ENCODE measurements at regions of chr18 and their contacts with region 1.

Region 1: DNA sequence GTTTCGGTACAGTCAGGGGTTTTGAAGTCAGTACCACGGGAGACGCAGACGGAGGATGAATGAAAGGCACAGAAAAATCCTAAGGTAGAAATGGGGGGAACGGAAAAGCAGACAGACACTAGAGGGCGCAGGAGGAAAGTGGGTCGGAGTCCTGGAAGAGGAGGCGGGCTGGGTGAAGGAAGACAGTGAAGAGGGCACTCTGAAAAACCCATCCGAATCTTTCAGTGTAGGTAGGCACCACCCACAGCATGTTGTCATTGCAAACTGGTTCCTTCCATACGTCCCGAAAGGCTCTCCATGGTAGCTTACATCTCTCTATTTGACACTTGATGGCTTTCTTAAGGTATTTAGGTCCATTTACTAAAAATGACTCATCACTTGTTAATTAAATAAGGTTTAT is 18.5 kb upstream of the ZNF236 start:
- DNase-seq: peak; percentile 51
- ATAC-seq: peak; percentile 84
- H3K4me3 ChIP-seq: no peak overlapping the region
- H3K27ac ChIP-seq: no peak overlapping the region
- H3K4me1 ChIP-seq: peaks cover 7% of the 10 kb centered on the region; the same call in 1 of the 2 replicates
- H3K27me3 ChIP-seq: no peaks in the 10 kb centered on the region
- CTCF ChIP-seq: peak; percentile 87 to 91 (median 90)
- EP300 ChIP-seq: no peak
- POLR2A ChIP-seq: no peak
- RAD21 ChIP-seq: peak; percentile 77

Region 2: GRCh38 chr18:76592981-76593381 is 210.8 kb before region 1 on chr18:
- CTCF ChIA-PET with region 1: no interaction called
- POLR2A ChIA-PET with region 1: no interaction called
- RAD21 ChIA-PET with region 1: no interaction called
- SMC1A ChIA-PET with region 1: no interaction called
- in situ Hi-C with region 1: no loop called
- intact Hi-C with region 1: no loop called
- DNase-seq: no peak
- ATAC-seq: no peak
- H3K4me3 ChIP-seq: no peak overlapping the region
- H3K27ac ChIP-seq: no peak overlapping the region
- H3K4me1 ChIP-seq: no peaks in the 10 kb centered on the region
- H3K27me3 ChIP-seq: no peaks in the 10 kb centered on the region; a peak in 1 of 4 replicates
- CTCF ChIP-seq: no peak
- EP300 ChIP-seq: no peak
- POLR2A ChIP-seq: no peak
- RAD21 ChIP-seq: no peak

Region 3: DNA sequence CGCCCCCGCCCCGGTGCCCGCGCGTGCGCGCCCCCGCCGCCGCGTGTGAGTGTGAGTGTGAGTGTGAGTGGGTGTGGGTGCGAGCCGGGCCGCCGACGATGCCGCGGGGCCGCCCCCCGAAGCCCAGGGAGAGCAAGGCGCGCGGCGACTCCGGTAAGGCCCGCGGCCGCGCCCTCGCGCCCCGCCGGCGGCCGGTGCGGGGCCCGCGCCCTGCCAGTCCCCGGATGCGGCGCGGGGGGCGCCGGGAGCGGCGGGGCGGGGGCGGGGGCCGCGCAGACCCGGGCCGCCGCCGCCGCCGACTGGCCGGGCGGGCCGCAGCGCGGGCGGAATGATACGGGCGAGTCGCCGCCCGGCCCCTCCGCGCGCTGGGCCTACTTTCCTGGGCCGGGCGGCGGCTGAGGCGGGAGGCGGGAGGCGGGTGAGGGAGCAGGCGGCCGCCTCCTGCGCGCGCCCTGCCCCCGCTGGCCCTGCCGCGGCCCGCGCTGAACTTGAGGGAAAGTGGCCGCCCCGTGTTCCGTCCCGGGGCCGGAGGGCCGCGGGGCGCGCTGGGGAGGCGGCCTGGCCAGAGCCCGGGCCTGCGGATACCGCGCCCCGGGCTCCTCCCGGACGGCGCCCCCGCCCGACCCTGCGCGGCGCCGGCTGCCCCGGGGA is 18.8 kb after region 1 on chr18 and contains the start of gene ZNF236:
- CTCF ChIA-PET with region 1: interaction called, 90 read pairs
- POLR2A ChIA-PET with region 1: interaction called, 4 read pairs
- RAD21 ChIA-PET with region 1: interaction called, 9 read pairs
- SMC1A ChIA-PET with region 1: interaction called, 27 read pairs
- in situ Hi-C with region 1: no loop called
- intact Hi-C with region 1: no loop called
- DNase-seq: no peak
- ATAC-seq: peak; percentile 47
- H3K4me3 ChIP-seq: peak within 1 kb of the TSS; percentile 100
- H3K27ac ChIP-seq: peak within 1 kb of the TSS; percentile 95
- H3K4me1 ChIP-seq: peaks cover 16% of the 10 kb centered on the region
- H3K27me3 ChIP-seq: no peaks in the 10 kb centered on the region
- CTCF ChIP-seq: no peak
- EP300 ChIP-seq: no peak
- POLR2A ChIP-seq: peak; percentile 76
- RAD21 ChIP-seq: no peak
- polyA plus RNA-seq, gene ZNF236: 1.0 to 1.3 TPM

Region 4: DNA sequence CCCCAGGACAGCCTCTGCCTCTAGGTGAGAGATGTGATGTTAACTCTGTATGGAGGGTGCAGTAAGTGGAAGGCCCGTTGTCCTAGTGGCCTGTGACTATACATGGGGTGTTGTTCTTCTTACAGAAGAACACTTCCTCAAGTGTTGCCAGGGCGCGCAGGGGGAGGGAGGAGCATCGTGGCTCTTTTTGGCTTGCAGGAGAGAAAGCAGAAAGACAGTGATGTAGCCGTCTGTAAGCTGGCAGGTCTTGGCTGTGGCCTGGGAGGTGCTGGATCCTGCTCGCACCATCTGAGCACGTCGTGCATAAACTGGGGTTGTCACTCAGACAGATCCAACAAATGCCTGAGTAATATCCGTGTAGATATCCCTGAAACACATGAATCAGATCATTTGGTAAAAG is 62.9 kb after region 1 on chr18:
- CTCF ChIA-PET with region 1: interaction called, 27 read pairs
- POLR2A ChIA-PET with region 1: no interaction called
- RAD21 ChIA-PET with region 1: no interaction called
- SMC1A ChIA-PET with region 1: interaction called, 7 read pairs
- in situ Hi-C with region 1: no loop called
- intact Hi-C with region 1: no loop called
- DNase-seq: no peak
- ATAC-seq: no peak
- H3K4me3 ChIP-seq: no peak overlapping the region
- H3K27ac ChIP-seq: no peak overlapping the region
- H3K4me1 ChIP-seq: no peaks in the 10 kb centered on the region
- H3K27me3 ChIP-seq: no peaks in the 10 kb centered on the region
- CTCF ChIP-seq: no peak
- EP300 ChIP-seq: no peak
- POLR2A ChIP-seq: no peak
- RAD21 ChIP-seq: no peak

Region 5: GRCh38 chr18:76922107-76922506 is 118.3 kb after region 1 on chr18:
- CTCF ChIA-PET with region 1: interaction called, 64 read pairs
- POLR2A ChIA-PET with region 1: no interaction called
- RAD21 ChIA-PET with region 1: interaction called, 21 read pairs
- SMC1A ChIA-PET with region 1: interaction called, 30 read pairs
- in situ Hi-C with region 1: no loop called
- intact Hi-C with region 1: loop called (anchors 1 kb)
- DNase-seq: peak; percentile 26
- ATAC-seq: peak; percentile 100
- H3K4me3 ChIP-seq: no peak overlapping the region
- H3K27ac ChIP-seq: no peak overlapping the region
- H3K4me1 ChIP-seq: no peaks in the 10 kb centered on the region
- H3K27me3 ChIP-seq: no peaks in the 10 kb centered on the region
- CTCF ChIP-seq: peak; percentile 81 to 83 (median 81)
- EP300 ChIP-seq: peak in 1 of 2 experiments; percentile 12; a peak in 1 of 4 replicates
- POLR2A ChIP-seq: no peak
- RAD21 ChIP-seq: peak; percentile 92

Region 6: GRCh38 chr18:77000527-77000926 is 196.7 kb after region 1 on chr18:
- CTCF ChIA-PET with region 1: interaction called, 16 read pairs
- POLR2A ChIA-PET with region 1: no interaction called
- RAD21 ChIA-PET with region 1: interaction called, 4 read pairs
- SMC1A ChIA-PET with region 1: interaction called, 4 read pairs
- in situ Hi-C with region 1: no loop called
- intact Hi-C with region 1: no loop called
- DNase-seq: no peak
- ATAC-seq: peak; percentile 69
- H3K4me3 ChIP-seq: no peak overlapping the region
- H3K27ac ChIP-seq: no peak overlapping the region
- H3K4me1 ChIP-seq: no peaks in the 10 kb centered on the region
- H3K27me3 ChIP-seq: no peaks in the 10 kb centered on the region
- CTCF ChIP-seq: peak; percentile 91 to 98 (median 97)
- EP300 ChIP-seq: no peak
- POLR2A ChIP-seq: no peak
- RAD21 ChIP-seq: peak; percentile 92

Region 7: GRCh38 chr18:77650799-77651385 is 847.1 kb after region 1 on chr18:
- CTCF ChIA-PET with region 1: interaction called, 10 read pairs
- POLR2A ChIA-PET with region 1: no interaction called
- RAD21 ChIA-PET with region 1: interaction called, 3 read pairs
- SMC1A ChIA-PET with region 1: interaction called, 4 read pairs
- in situ Hi-C with region 1: no loop called
- intact Hi-C with region 1: loop called (anchors 2 kb)
- DNase-seq: no peak
- ATAC-seq: peak; percentile 77
- H3K4me3 ChIP-seq: no peak overlapping the region
- H3K27ac ChIP-seq: no peak overlapping the region
- H3K4me1 ChIP-seq: no peaks in the 10 kb centered on the region
- H3K27me3 ChIP-seq: no peaks in the 10 kb centered on the region
- CTCF ChIP-seq: peak; percentile 76 to 84 (median 82); a peak in 5 of 6 replicates
- EP300 ChIP-seq: no peak
- POLR2A ChIP-seq: no peak
- RAD21 ChIP-seq: peak; percentile 79

Measured in GM12878 (cell line).